IMR-90 (cell line): ENCODE measurements at regions of chr4 and their contacts with region 1.

Region 1: GRCh38 chr4:155953151-155954114 is at the start of gene CTSO:
- DNase-seq: peak; percentile 85
- ATAC-seq: peak; percentile 94
- H3K4me3 ChIP-seq: peak within 1 kb of the TSS; percentile 76
- H3K27ac ChIP-seq: peak within 1 kb of the TSS; percentile 99
- H3K4me1 ChIP-seq: peaks cover 8% of the 10 kb centered on the region
- H3K27me3 ChIP-seq: no peaks in the 10 kb centered on the region
- CTCF ChIP-seq: peak; percentile 72
- POLR2A ChIP-seq: peak; percentile 62
- RAD21 ChIP-seq: peak; percentile 70
- total RNA-seq, gene CTSO: 2.9 and 3.6 TPM in 2 replicates

Region 2: DNA sequence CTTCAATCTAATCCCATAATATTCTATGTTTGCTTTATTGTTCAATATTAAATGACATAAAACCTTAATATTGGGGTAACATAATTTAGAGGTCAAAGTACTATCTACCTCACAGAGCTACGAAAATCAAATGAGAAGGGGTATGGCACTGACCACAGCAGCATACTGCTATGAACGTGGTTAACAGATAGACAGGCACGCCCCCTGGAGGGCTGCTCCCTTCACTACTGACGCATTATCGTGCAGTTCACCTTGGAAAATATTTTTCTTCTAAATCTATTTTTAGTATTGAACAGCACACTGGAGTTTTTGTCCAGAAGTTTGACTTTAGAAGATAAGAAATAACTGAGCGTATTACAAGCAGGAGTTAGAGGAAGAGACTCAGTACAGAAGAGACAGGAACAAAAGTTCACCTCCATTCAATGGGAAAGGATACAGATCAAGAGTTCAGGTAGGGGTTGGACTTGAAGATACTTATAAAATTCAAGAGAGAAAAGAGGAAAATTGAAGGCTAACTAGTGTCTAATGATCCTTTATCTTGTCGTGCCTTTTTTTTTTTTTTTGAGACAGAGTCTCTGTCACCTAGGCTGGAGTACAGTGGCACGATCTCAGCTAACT is 599.4 kb before region 1 on chr4:
- CTCF ChIA-PET with region 1: no interaction called
- POLR2A ChIA-PET with region 1: no interaction called
- dilution Hi-C with region 1: no loop called
- in situ Hi-C with region 1: no loop called
- intact Hi-C with region 1: no loop called
- DNase-seq: peak; percentile 46
- ATAC-seq: peak; percentile 95
- H3K4me3 ChIP-seq: no peak overlapping the region
- H3K27ac ChIP-seq: no peak overlapping the region
- H3K4me1 ChIP-seq: no peaks in the 10 kb centered on the region
- H3K27me3 ChIP-seq: no peaks in the 10 kb centered on the region
- CTCF ChIP-seq: peak; percentile 68
- POLR2A ChIP-seq: no peak
- RAD21 ChIP-seq: peak; percentile 65

Region 3: GRCh38 chr4:155383545-155383944 is 569.9 kb before region 1 on chr4:
- CTCF ChIA-PET with region 1: no interaction called
- POLR2A ChIA-PET with region 1: no interaction called
- dilution Hi-C with region 1: no loop called
- in situ Hi-C with region 1: no loop called
- intact Hi-C with region 1: no loop called
- DNase-seq: no peak
- ATAC-seq: no peak
- H3K4me3 ChIP-seq: no peak overlapping the region
- H3K27ac ChIP-seq: no peak overlapping the region
- H3K4me1 ChIP-seq: no peaks in the 10 kb centered on the region
- H3K27me3 ChIP-seq: peaks cover 3% of the 10 kb centered on the region; the same call in 1 of the 2 replicates
- CTCF ChIP-seq: no peak
- POLR2A ChIP-seq: no peak
- RAD21 ChIP-seq: no peak

Region 4: GRCh38 chr4:155403886-155404285 is 549.5 kb before region 1 on chr4:
- CTCF ChIA-PET with region 1: interaction called, 10 read pairs
- POLR2A ChIA-PET with region 1: interaction called, 4 read pairs
- dilution Hi-C with region 1: no loop called
- in situ Hi-C with region 1: loop called (anchors 5 kb)
- intact Hi-C with region 1: loop called (anchors 1 kb)
- DNase-seq: peak; percentile 72
- ATAC-seq: peak; percentile 84
- H3K4me3 ChIP-seq: no peak overlapping the region
- H3K27ac ChIP-seq: no peak overlapping the region
- H3K4me1 ChIP-seq: no peaks in the 10 kb centered on the region; the same call in 1 of the 2 replicates
- H3K27me3 ChIP-seq: no peaks in the 10 kb centered on the region
- CTCF ChIP-seq: peak; percentile 72
- POLR2A ChIP-seq: no peak
- RAD21 ChIP-seq: peak; percentile 80

Region 5: DNA sequence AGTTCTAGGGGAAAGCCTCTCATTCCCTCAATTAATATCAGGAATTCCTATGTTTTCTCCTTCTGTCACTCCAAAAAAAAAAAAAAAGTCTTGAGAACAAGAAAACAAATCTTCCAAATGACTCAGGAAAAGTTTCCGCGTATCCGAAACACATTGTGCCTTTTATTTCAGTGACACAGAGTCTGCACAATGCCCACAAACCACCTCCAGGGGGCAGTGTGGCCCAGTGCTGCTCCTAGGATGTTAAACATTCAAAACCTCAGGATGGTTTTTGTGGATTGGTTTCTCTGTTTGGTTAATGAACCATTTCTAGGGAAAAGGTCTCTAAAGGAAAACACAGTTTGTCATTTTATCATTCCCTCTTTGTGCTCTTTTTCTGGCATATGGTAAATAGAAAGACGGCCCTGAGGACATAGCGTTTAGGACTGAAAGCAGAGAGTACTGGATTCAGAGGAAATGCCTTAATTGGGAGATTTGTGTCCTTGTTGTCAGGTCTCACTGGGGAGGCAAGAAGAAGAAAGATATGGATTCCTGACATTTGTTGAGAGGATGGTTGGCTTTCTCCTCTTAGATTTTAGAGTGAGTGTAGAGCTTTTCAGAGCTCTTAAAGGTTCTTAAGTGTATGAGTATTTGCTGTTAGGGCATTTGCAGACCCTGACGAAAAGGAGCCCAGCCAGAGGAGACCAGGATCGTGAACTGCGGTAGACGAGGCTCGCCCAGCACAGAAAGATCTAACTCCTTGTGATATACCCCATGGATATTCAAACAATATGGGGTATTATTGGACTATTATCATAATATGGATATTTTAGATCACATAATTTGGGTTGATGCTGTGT is 510.9 kb before region 1 on chr4:
- CTCF ChIA-PET with region 1: interaction called, 3 read pairs
- POLR2A ChIA-PET with region 1: no interaction called
- dilution Hi-C with region 1: no loop called
- in situ Hi-C with region 1: loop called (anchors 10 kb)
- intact Hi-C with region 1: loop called (anchors 1 kb)
- DNase-seq: peak; percentile 76
- ATAC-seq: peak; percentile 94
- H3K4me3 ChIP-seq: no peak overlapping the region
- H3K27ac ChIP-seq: peak overlapping the region; percentile 48; the same call in 1 of the 2 replicates
- H3K4me1 ChIP-seq: peaks cover 2% of the 10 kb centered on the region; the same call in 1 of the 2 replicates
- H3K27me3 ChIP-seq: no peaks in the 10 kb centered on the region
- CTCF ChIP-seq: peak; percentile 92
- POLR2A ChIP-seq: no peak
- RAD21 ChIP-seq: peak; percentile 92

Region 6: DNA sequence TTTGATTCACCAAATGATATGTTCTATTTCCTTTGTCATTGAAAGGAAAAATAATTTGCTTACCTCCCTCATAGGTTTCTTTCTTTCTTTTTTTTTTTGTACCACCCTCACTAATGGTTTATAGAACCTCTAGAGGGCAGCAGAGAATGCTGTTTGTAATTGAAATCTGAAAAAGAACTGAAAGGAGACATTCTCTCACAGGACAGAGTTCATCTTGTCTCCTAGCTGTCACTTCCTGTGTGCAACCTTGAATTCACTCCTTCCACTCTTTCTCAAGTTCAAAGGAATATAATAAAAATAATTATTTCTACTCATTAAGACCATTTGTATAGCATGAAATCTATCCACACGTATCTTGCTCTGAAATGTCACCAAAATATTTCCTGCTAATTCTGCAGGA is 143.6 kb before region 1 on chr4:
- CTCF ChIA-PET with region 1: interaction called, 42 read pairs
- POLR2A ChIA-PET with region 1: interaction called, 6 read pairs
- dilution Hi-C with region 1: no loop called
- in situ Hi-C with region 1: loop called (anchors 5 kb)
- intact Hi-C with region 1: loop called (anchors 1 kb)
- DNase-seq: peak; percentile 92
- ATAC-seq: peak; percentile 78
- H3K4me3 ChIP-seq: no peak overlapping the region
- H3K27ac ChIP-seq: no peak overlapping the region
- H3K4me1 ChIP-seq: peaks cover 5% of the 10 kb centered on the region
- H3K27me3 ChIP-seq: no peaks in the 10 kb centered on the region
- CTCF ChIP-seq: peak; percentile 76
- POLR2A ChIP-seq: no peak
- RAD21 ChIP-seq: peak; percentile 81

Region 7: DNA sequence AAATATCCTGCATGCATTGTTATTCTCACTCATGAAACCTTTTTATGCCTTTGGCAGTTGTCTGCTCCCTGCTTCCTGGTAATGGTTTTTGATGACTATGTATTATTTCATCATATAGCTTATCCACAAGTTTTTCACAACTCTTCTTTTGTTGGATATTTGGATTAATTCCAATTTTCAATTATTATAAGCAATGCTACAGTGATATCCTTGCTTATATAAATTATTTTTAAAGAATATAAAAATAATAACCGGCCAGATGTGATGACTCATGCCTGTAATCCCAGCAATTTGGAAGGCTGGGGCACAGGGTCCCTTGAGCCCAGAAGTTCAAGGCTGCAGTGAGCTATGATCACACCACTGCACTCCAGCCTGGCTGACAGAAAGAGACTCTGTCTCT is 134.4 kb before region 1 on chr4:
- CTCF ChIA-PET with region 1: interaction called, 14 read pairs
- POLR2A ChIA-PET with region 1: no interaction called
- dilution Hi-C with region 1: no loop called
- in situ Hi-C with region 1: no loop called
- intact Hi-C with region 1: no loop called
- DNase-seq: no peak
- ATAC-seq: no peak
- H3K4me3 ChIP-seq: no peak overlapping the region
- H3K27ac ChIP-seq: no peak overlapping the region
- H3K4me1 ChIP-seq: no peaks in the 10 kb centered on the region
- H3K27me3 ChIP-seq: no peaks in the 10 kb centered on the region
- CTCF ChIP-seq: no peak
- POLR2A ChIP-seq: no peak
- RAD21 ChIP-seq: no peak

Region 8: GRCh38 chr4:155846929-155847328 is 106.5 kb before region 1 on chr4:
- CTCF ChIA-PET with region 1: interaction called, 10 read pairs
- POLR2A ChIA-PET with region 1: no interaction called
- dilution Hi-C with region 1: no loop called
- in situ Hi-C with region 1: no loop called
- intact Hi-C with region 1: no loop called
- DNase-seq: no peak
- ATAC-seq: no peak
- H3K4me3 ChIP-seq: no peak overlapping the region
- H3K27ac ChIP-seq: no peak overlapping the region
- H3K4me1 ChIP-seq: no peaks in the 10 kb centered on the region
- H3K27me3 ChIP-seq: no peaks in the 10 kb centered on the region
- CTCF ChIP-seq: no peak
- POLR2A ChIP-seq: no peak
- RAD21 ChIP-seq: no peak

Region 9: DNA sequence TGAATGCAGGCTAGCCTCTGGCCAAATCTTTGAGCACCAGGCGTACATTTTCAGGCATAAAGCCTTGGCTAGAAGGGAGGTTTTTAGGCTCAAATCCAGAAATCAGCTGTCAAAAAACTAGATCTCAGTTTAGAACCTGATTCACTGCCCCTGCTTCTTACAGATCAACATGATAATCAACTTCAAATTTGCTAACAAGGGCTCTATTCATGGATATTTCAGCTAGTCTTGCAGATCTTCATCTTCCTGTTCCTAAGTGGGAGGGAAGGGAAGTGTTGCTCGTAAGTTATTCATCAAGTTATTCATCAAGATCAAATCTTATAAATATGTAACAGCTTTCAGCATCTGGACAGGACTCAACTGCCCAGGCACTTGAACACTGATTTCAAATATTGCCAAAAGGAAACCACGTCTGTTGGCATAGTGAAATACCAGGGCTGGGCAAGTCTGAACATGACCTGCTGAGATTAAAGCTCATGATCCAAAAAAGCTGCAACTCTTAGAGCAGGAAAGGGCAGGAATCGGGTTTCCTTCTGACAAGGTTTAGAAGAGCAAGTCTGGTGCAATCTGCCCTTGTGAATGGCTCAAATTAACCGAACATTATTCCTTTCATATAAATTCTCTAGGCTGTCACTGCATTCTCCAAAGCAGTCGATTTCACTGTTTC is 817.9 kb after region 1 on chr4:
- CTCF ChIA-PET with region 1: no interaction called
- POLR2A ChIA-PET with region 1: no interaction called
- dilution Hi-C with region 1: no loop called
- in situ Hi-C with region 1: loop called (anchors 25 kb)
- intact Hi-C with region 1: no loop called
- DNase-seq: peak; percentile 69
- ATAC-seq: peak; percentile 69
- H3K4me3 ChIP-seq: no peak overlapping the region
- H3K27ac ChIP-seq: peak overlapping the region; percentile 91
- H3K4me1 ChIP-seq: peaks cover 10% of the 10 kb centered on the region
- H3K27me3 ChIP-seq: no peaks in the 10 kb centered on the region
- CTCF ChIP-seq: no peak
- POLR2A ChIP-seq: no peak
- RAD21 ChIP-seq: no peak